ENCODE measurements at regions of chr5 and their contacts with region 1.

Region 1: DNA sequence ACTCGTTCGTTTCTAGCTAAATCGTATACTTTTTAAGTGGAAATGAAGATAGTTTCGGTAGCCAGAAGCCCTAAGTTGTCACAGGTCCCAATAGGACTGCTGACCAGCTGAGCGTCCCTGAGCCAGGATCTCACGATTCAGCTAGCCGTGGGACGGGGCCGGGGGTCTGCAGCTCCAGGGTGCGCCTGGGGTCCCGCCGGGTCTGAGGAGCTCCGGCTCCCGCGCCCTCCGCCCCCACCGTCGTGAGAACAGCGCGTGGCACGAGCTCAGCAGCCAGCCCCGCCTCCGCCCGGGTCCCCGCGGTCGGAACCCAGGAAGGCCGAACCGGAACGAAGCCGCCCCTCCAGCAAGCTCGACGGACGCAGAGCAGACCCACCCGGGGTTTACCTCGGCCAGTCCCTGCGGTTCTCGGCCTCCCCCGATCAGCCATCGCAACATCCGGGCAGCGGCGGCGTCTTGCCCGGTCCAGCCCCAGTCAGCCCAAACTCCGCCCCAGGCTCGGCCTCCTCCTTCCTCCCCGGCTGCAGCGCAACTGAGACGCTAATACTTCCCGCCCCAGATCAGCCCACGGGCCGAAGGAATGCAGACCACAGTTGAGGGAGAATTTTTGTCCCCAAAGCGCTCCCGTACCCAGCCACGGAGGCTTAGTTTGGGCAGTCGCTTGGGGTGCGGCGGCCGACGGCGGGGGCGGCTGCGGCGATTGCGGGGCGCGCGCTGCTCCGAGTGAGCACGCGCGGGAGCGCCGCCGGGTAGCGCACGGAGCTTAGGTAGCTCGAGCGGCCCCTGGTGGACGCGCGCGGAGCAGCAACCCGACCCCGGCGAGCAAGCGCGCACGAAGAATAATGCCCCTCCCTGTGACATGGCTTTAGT is at the start of gene WDR41:
- DNase-seq: peak; percentile 85
- ATAC-seq: peak; percentile 92
- H3K4me3 ChIP-seq: peak within 1 kb of the TSS; percentile 82
- H3K27ac ChIP-seq: peak within 1 kb of the TSS; percentile 96
- H3K4me1 ChIP-seq: peaks cover 4% of the 10 kb centered on the region
- H3K27me3 ChIP-seq: no peaks in the 10 kb centered on the region
- CTCF ChIP-seq: peak; percentile 88 to 93 (median 93)
- EP300 ChIP-seq: peak in 1 of 2 experiments; percentile 59; a peak in 2 of 4 replicates
- POLR2A ChIP-seq: peak; percentile 94
- RAD21 ChIP-seq: peak; percentile 53
- polyA plus RNA-seq, gene WDR41: 60.0 to 86.4 TPM

Region 2: DNA sequence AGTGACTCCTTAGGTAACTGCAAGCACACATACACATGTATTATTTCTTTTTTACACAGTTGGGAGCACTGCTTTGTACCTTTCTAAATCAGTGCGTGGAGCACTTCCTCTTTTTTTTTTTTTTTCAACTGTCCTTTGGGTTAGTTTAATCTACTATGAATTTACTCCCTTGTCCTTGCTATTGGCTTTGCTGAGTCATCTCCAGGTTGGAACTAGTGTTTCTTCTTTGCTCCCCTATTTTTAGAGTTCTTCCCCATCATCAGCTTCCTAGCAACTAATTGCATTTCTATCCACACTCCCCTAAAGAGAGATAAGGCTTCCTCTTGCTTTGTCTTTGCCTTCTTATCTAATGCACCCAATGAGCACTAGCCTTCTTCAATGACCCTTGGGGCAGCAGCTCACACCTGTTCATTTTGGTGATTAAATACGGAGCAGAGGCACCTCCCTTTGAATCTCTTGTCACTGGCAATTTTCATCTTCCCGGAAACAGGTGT is 617.9 kb before region 1 on chr5:
- CTCF ChIA-PET with region 1: interaction called, 4 read pairs
- POLR2A ChIA-PET with region 1: no interaction called
- RAD21 ChIA-PET with region 1: no interaction called
- SMC1A ChIA-PET with region 1: interaction called, 4 read pairs
- in situ Hi-C with region 1: no loop called
- intact Hi-C with region 1: loop called (anchors 10 kb)
- DNase-seq: peak; percentile 39
- ATAC-seq: peak; percentile 89
- H3K4me3 ChIP-seq: no peak overlapping the region; the same call in 1 of the 2 replicates
- H3K27ac ChIP-seq: peak overlapping the region; percentile 30; the same call in 1 of the 2 replicates
- H3K4me1 ChIP-seq: peaks cover 11% of the 10 kb centered on the region; the same call in 1 of the 2 replicates
- H3K27me3 ChIP-seq: no peaks in the 10 kb centered on the region
- CTCF ChIP-seq: no peak
- EP300 ChIP-seq: peak in 1 of 2 experiments; percentile 64; a peak in 1 of 4 replicates
- POLR2A ChIP-seq: no peak
- RAD21 ChIP-seq: no peak

Region 3: DNA sequence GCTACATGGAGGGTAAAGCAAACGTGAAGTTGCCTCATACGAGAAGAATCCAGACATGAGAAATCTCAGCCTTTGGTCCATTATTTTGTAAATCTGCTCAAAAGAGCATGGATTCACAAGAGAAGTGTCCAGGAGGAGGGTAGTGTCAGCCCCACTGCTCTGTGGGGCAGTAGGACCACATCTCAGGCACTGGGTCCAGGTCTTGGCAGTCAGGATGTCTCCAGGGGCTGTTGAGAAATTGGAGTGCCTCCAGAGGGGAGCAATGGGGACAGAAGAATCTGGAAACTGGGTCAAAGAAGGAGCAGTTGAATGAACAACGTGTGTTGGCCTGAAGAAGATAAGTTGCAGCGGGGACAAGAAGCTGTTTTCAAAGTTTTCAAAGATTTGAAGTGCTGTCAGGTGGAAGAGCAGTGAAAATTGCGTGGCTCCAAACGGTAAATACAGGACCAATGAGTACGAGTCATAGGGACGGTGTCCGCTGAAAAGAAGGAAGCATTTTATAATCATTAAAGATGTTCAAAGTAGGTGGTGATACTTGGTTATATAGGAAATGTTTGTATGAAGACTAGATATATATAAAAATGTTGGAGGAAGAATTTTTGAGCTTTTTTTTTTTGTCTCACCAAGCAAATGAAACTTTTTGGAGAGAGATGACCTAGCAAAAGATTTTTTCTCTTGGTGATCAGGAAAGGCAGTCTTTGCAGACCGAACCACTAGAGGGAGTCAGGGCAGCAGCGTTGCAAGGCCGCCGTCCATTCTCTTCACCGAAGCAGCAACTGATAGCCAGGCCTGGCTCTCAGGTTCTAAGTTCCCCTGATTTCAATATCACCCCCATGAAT is 347.8 kb before region 1 on chr5:
- CTCF ChIA-PET with region 1: interaction called, 35 read pairs
- POLR2A ChIA-PET with region 1: no interaction called
- RAD21 ChIA-PET with region 1: interaction called, 7 read pairs
- SMC1A ChIA-PET with region 1: interaction called, 14 read pairs
- in situ Hi-C with region 1: loop called (anchors 10 kb)
- intact Hi-C with region 1: loop called (anchors 2 kb)
- DNase-seq: peak; percentile 13
- ATAC-seq: peak; percentile 92
- H3K4me3 ChIP-seq: no peak overlapping the region
- H3K27ac ChIP-seq: no peak overlapping the region
- H3K4me1 ChIP-seq: no peaks in the 10 kb centered on the region
- H3K27me3 ChIP-seq: no peaks in the 10 kb centered on the region
- CTCF ChIP-seq: peak; percentile 78 to 90 (median 84)
- EP300 ChIP-seq: no peak
- POLR2A ChIP-seq: no peak
- RAD21 ChIP-seq: peak; percentile 90

Region 4: GRCh38 chr5:77379558-77380061 is 112.4 kb before region 1 on chr5:
- CTCF ChIA-PET with region 1: interaction called, 13 read pairs
- POLR2A ChIA-PET with region 1: interaction called, 3 read pairs
- RAD21 ChIA-PET with region 1: interaction called, 4 read pairs
- SMC1A ChIA-PET with region 1: interaction called, 8 read pairs
- in situ Hi-C with region 1: no loop called
- intact Hi-C with region 1: loop called (anchors 2 kb)
- DNase-seq: peak; percentile 67
- ATAC-seq: peak; percentile 93
- H3K4me3 ChIP-seq: no peak overlapping the region
- H3K27ac ChIP-seq: peak overlapping the region; percentile 42; the same call in 1 of the 2 replicates
- H3K4me1 ChIP-seq: peaks cover 22% of the 10 kb centered on the region
- H3K27me3 ChIP-seq: no peaks in the 10 kb centered on the region
- CTCF ChIP-seq: no peak
- EP300 ChIP-seq: peak; percentile 67 to 90
- POLR2A ChIP-seq: no peak
- RAD21 ChIP-seq: no peak

Region 5: DNA sequence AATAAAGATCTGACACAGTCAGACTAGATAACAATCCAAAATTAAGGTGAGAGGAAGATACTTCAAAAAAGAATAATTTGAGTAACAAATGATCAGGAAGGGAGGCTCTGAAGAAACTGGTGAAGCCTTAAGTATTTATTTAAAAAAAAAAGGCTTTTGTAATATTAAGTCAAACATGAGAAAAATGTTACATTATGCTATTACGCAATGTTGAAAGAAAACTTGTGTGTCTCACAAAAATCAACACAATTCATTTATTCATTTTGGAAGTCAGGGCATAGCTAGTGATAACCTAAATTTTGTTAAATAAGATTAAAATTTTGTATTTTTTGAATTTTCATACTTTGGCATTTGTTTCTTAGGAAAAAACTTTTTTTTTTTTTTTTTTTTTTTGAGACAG is 28.1 kb before region 1 on chr5:
- CTCF ChIA-PET with region 1: interaction called, 6 read pairs
- POLR2A ChIA-PET with region 1: interaction called, 6 read pairs
- RAD21 ChIA-PET with region 1: interaction called, 17 read pairs
- SMC1A ChIA-PET with region 1: interaction called, 9 read pairs
- in situ Hi-C with region 1: no loop called
- intact Hi-C with region 1: no loop called
- DNase-seq: no peak
- ATAC-seq: no peak
- H3K4me3 ChIP-seq: no peak overlapping the region
- H3K27ac ChIP-seq: no peak overlapping the region
- H3K4me1 ChIP-seq: no peaks in the 10 kb centered on the region
- H3K27me3 ChIP-seq: no peaks in the 10 kb centered on the region
- CTCF ChIP-seq: no peak
- EP300 ChIP-seq: no peak
- POLR2A ChIP-seq: no peak
- RAD21 ChIP-seq: no peak

Region 6: DNA sequence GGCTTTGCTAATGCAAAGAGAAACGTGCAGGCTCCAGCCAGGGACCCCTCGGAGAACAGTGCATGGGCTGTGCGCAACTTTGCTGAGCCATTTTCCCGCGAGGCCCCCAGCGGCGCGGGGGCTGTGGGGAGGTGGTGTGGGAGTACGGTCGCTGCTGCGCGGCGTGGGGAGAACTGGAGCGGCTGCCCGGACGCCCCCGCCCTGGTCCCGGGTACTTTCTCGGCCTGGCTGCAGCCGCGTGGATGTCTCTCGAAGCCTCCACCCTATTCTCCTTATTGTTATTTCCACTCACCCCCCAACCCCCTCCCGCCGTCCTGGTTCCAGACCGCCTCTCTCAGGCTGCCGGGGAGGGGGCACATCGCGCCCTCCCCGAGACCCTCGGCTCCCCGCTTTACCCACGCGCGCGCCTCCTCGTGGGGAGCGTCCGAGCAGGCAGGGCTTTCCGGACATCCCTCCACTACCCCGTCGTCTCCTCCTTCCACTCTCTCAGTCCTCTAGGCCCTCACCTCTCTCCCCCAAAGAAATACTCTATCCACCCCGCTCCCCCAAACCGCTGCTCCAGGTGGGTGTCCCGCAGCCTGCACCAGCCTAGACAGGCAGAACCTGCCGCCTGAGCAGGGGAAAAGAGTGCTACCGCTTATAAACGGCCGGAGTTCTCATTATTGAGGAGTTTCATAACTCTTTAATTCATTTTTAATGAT is 352.8 kb after region 1 on chr5:
- CTCF ChIA-PET with region 1: no interaction called
- POLR2A ChIA-PET with region 1: no interaction called
- RAD21 ChIA-PET with region 1: no interaction called
- SMC1A ChIA-PET with region 1: no interaction called
- in situ Hi-C with region 1: no loop called
- intact Hi-C with region 1: no loop called
- DNase-seq: no peak
- ATAC-seq: no peak
- H3K4me3 ChIP-seq: peak overlapping the region; percentile 12; the same call in 1 of the 2 replicates
- H3K27ac ChIP-seq: no peak overlapping the region
- H3K4me1 ChIP-seq: no peaks in the 10 kb centered on the region; the same call in 1 of the 2 replicates
- H3K27me3 ChIP-seq: peaks cover 0 to 2% of the 10 kb centered on the region in 2 experiments; a peak in 2 of 4 replicates
- CTCF ChIP-seq: 0 out of 6 replicates have a peak, but pooled peaks of 1 of the 3 experiments have one; percentile 11
- EP300 ChIP-seq: no peak
- POLR2A ChIP-seq: no peak
- RAD21 ChIP-seq: no peak